ENCODE measurements at regions of chr20 and their contacts with region 1.

Region 1: DNA sequence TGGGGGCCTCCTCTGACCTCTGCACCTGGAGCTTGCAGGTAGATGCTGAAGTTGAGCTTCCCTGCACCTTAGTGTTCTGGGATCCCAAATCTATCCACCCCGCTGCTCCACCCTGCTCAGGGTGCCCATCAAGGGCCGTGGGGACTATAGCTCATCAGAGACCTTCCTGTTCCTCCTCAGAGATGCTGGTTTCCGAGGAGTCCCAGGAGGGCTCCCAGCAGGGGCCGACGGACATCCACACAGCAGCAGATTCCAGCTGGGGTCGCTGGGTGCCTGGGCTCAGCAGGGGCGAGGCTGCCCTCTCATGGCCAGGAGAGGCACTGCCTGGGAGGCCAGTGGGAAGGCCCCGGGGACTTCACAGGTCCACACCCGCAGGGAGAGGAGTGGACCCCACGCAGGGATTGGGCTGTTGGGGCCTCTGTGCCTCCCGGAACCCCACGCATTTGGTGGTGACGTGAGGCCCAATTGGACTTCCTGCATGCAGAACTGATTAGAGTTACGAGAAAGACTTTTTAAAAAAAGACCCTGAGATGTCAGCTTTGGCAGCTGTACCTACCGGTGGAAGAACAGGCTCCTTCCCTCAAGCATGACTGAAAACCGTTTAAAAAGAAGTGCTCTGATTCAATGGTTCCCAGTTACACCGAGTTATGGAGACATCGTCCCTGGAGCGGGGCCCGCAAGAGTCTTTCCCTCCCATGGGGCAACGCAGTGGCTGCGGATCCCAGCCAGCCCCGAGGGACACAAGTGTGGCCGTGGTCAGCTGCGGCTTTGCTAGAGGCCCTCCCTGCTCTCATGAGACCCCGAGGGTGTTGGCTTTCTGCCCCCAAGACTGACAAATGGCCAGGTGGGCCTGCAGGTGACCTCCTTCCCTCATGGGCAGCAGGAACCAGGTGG is 25.3 kb upstream of the SLCO4A1 start:
- DNase-seq: peak; percentile 81
- ATAC-seq: peak; percentile 87
- H3K4me3 Mint-ChIP-seq: no peak overlapping the region
- H3K27ac Mint-ChIP-seq: no peak overlapping the region
- H3K4me1 Mint-ChIP-seq: peaks cover 6% of the 10 kb centered on the region
- H3K27me3 Mint-ChIP-seq: no peaks in the 10 kb centered on the region; the same call in 1 of the 2 replicates
- CTCF ChIP-seq: peak; percentile 70

Region 2: GRCh38 chr20:62409931-62410745 is 206.8 kb before region 1 on chr20:
- CTCF ChIA-PET with region 1: interaction called, 11 read pairs
- POLR2A ChIA-PET with region 1: no interaction called
- DNase-seq: peak; percentile 76
- ATAC-seq: peak; percentile 29
- H3K4me3 Mint-ChIP-seq: no peak overlapping the region
- H3K27ac Mint-ChIP-seq: no peak overlapping the region
- H3K4me1 Mint-ChIP-seq: peaks cover 9% of the 10 kb centered on the region
- H3K27me3 Mint-ChIP-seq: peaks cover 5% of the 10 kb centered on the region
- CTCF ChIP-seq: peak; percentile 54; the same call in 1 of the 2 replicates

Region 3: GRCh38 chr20:62500237-62500864 is 116.6 kb before region 1 on chr20:
- CTCF ChIA-PET with region 1: interaction called, 45 read pairs
- POLR2A ChIA-PET with region 1: no interaction called
- DNase-seq: peak; percentile 88
- ATAC-seq: peak; percentile 64
- H3K4me3 Mint-ChIP-seq: no peak overlapping the region
- H3K27ac Mint-ChIP-seq: peak overlapping the region; percentile 0; the same call in 1 of the 2 replicates
- H3K4me1 Mint-ChIP-seq: peaks cover 3% of the 10 kb centered on the region
- H3K27me3 Mint-ChIP-seq: peaks cover 5% of the 10 kb centered on the region; the same call in 1 of the 2 replicates
- CTCF ChIP-seq: peak; percentile 82

Region 4: DNA sequence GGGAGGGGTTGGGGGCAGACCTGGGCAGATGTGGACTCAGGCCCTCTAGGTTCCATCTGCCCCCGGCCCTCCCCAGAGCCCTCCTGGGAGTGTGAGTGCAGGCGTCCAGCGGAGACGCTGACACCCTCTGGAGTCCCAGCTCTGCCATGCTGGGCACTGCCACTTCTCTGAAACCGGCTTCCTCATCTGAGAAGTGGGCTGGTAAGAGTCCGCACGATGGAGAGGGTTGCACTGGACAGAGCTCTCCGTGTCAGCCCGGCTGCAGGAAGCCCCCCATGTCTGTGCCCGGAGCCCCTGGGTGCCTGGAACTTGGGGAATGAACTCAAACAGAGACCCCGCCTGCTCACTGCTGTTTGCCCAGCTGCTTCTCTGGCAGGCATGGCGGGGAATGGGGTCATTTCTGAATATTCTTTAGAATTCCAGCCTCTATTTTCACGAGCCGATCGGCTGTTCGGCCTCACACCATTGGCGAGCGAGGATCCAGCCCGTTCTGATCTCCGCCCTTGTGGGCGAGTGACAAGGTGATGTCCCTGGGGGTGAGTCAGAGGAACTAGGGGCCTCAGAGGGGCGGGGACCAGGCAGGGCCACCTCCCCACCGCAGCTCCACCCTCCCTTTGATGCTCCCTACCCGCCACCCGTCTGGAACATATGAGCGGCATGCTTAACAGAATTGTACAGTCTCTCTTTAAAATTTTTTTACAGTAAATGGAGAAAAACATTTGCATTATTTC is 93.3 kb before region 1 on chr20:
- CTCF ChIA-PET with region 1: interaction called, 22 read pairs
- POLR2A ChIA-PET with region 1: no interaction called
- DNase-seq: peak; percentile 52
- ATAC-seq: peak; percentile 88
- H3K4me3 Mint-ChIP-seq: peak overlapping the region; percentile 12; the same call in 1 of the 2 replicates
- H3K27ac Mint-ChIP-seq: no peak overlapping the region
- H3K4me1 Mint-ChIP-seq: peaks cover 11% of the 10 kb centered on the region
- H3K27me3 Mint-ChIP-seq: no peaks in the 10 kb centered on the region
- CTCF ChIP-seq: no peak

Region 5: GRCh38 chr20:62557445-62557844 is 59.5 kb before region 1 on chr20:
- CTCF ChIA-PET with region 1: interaction called, 12 read pairs
- POLR2A ChIA-PET with region 1: no interaction called
- DNase-seq: no peak
- ATAC-seq: no peak
- H3K4me3 Mint-ChIP-seq: no peak overlapping the region
- H3K27ac Mint-ChIP-seq: no peak overlapping the region
- H3K4me1 Mint-ChIP-seq: 0 out of 2 replicates have a peak, but pooled peaks cover 3% of the 10 kb centered on the region
- H3K27me3 Mint-ChIP-seq: peaks cover 4% of the 10 kb centered on the region
- CTCF ChIP-seq: no peak

Region 6: DNA sequence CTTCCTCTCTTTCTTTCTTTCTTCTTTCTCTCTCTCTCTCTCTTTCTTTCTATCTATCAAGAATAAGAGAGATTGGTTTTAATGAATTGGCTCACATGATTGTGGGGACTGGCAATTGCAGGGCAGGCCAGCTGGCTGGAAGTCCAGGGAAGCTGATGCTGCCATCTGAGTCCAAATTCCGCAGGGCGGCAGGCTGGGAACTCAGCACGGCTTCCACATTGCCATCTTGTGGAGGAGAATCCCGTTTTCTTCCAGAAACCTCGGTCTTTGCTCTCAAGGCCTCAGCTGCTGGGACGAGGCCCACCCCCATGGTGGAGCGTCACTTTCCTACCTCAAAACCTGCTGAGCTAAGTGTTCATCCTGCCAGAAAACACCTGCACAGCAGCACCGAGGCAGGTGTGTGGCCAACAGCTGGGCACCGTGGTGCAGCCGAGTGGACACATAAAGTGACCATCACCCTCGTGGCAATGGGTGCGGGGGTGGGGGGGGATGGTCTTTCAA is 33.5 kb before region 1 on chr20:
- CTCF ChIA-PET with region 1: interaction called, 22 read pairs
- POLR2A ChIA-PET with region 1: no interaction called
- DNase-seq: no peak
- ATAC-seq: no peak; the same call in 1 of the 2 replicates
- H3K4me3 Mint-ChIP-seq: no peak overlapping the region
- H3K27ac Mint-ChIP-seq: no peak overlapping the region
- H3K4me1 Mint-ChIP-seq: peaks cover 2% of the 10 kb centered on the region; the same call in 1 of the 2 replicates
- H3K27me3 Mint-ChIP-seq: no peaks in the 10 kb centered on the region; the same call in 1 of the 2 replicates
- CTCF ChIP-seq: no peak

Region 7: GRCh38 chr20:62642040-62642665 is 25.2 kb after region 1 on chr20 and contains the start of gene SLCO4A1:
- CTCF ChIA-PET with region 1: interaction called, 16 read pairs
- POLR2A ChIA-PET with region 1: no interaction called
- DNase-seq: peak; percentile 73
- ATAC-seq: peak; percentile 76
- H3K4me3 Mint-ChIP-seq: peak within 1 kb of the TSS; percentile 65
- H3K27ac Mint-ChIP-seq: no peak within 1 kb of the TSS
- H3K4me1 Mint-ChIP-seq: peaks cover 13% of the 10 kb centered on the region
- H3K27me3 Mint-ChIP-seq: peaks cover 41% of the 10 kb centered on the region
- CTCF ChIP-seq: no peak
- total RNA-seq, gene SLCO4A1: 15.2 to 19.9 TPM (median 18.5 TPM) in 3 replicates

Region 8: DNA sequence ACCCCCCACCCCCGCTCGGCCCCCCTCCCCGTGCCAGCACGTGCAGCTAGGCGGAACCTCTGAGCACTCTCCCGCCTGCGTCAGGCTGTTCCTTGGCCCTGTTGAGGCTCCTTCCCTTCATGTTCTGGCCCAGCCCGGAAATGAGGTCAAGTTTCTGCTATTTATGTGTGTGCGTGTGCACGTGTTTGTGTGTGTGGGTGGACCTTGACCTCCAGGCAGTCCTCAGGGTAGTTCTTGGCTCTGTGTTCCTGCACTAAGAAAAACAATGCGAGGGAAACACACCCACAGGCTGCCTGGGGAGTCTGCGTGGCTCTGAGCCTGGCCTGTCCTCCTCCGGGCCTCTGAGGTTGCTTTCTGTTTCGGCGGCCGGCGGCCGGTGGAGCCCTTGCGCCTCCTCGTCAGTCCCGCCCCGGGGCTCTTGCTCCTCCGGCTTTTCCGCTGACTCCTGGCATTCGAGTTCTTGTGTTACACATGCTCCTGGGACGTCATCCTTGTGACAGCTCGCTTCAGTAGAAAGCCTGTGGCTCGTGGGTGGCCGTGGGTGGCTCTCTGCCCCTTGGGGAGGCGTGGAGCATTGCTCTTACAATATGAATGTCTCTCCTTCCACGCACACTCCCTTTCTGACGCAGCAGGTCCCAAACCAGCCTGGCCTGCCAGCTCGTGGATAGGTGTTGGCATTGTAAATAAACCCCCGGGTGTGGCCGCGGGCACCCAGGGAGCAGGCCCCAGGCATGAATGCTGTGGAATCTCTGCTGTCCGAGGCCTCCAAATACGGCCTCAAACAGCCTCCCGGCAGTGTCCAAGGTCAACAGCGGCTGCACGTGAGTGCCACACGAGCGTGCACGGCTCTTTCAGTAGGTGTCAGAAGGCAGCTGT is 35.3 kb after region 1 on chr20:
- CTCF ChIA-PET with region 1: no interaction called
- POLR2A ChIA-PET with region 1: no interaction called
- DNase-seq: peak; percentile 50
- ATAC-seq: peak; percentile 39
- H3K4me3 Mint-ChIP-seq: no peak overlapping the region
- H3K27ac Mint-ChIP-seq: peak overlapping the region; percentile 82
- H3K4me1 Mint-ChIP-seq: peaks cover 18% of the 10 kb centered on the region
- H3K27me3 Mint-ChIP-seq: no peaks in the 10 kb centered on the region
- CTCF ChIP-seq: no peak

Region 9: DNA sequence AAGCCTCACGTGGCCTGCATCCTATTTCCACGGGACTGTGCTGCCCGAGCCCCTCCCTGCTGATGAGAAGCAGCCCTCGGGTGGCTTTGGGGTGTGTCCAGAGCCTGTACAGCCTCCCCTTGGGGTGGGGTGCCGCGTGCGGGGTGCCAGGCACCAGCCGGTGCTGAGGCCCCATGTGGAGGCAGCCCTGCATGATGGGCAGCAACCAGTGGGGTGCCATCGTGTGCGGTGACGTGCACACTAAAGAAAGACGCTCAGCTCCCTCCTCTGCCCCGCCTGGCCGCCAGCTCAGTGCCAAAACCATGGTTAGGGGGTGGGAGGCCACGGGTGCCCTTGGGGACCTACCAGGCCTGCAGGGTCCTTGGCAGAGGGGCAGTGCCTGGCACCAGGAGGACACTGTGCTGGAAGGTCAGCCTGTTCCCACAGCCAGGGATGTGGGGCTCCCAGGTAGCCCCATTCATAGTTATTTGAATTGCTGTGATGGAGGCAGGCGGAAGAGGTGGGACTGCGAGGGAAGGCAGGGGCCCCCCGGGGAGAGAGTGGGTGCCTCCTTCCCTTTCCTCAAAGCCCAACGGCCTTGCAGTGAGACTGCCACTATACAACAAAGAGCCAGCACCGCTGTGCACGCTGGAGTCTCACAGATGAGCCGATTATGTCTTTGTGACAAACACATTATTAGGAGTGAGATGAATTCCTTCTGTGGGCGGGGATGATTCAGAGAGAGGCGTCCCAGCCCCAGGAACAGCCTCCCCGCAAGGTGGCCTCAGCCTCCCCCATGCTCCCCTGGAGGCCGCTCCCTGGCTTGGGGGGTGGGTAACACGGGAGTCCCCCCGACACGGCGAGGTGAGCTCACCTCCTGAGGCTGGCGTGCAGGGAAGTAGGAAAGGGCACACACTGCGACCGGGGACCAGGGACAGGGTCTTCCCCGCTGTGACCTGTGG is 118.2 kb after region 1 on chr20:
- CTCF ChIA-PET with region 1: no interaction called
- POLR2A ChIA-PET with region 1: no interaction called
- DNase-seq: no peak
- ATAC-seq: no peak
- H3K4me3 Mint-ChIP-seq: no peak overlapping the region
- H3K27ac Mint-ChIP-seq: no peak overlapping the region
- H3K4me1 Mint-ChIP-seq: peaks cover 3% of the 10 kb centered on the region; the same call in 1 of the 2 replicates
- H3K27me3 Mint-ChIP-seq: peaks cover 8% of the 10 kb centered on the region
- CTCF ChIP-seq: no peak

Region 10: GRCh38 chr20:62771396-62772102 is 154.6 kb after region 1 on chr20:
- CTCF ChIA-PET with region 1: no interaction called
- POLR2A ChIA-PET with region 1: no interaction called
- DNase-seq: no peak
- ATAC-seq: no peak
- H3K4me3 Mint-ChIP-seq: no peak overlapping the region
- H3K27ac Mint-ChIP-seq: no peak overlapping the region
- H3K4me1 Mint-ChIP-seq: peaks cover 6% of the 10 kb centered on the region
- H3K27me3 Mint-ChIP-seq: no peaks in the 10 kb centered on the region
- CTCF ChIP-seq: no peak

Region 11: GRCh38 chr20:63246490-63247288 is 629.7 kb after region 1 on chr20:
- CTCF ChIA-PET with region 1: no interaction called
- POLR2A ChIA-PET with region 1: no interaction called
- DNase-seq: peak; percentile 54
- ATAC-seq: peak; percentile 71
- H3K4me3 Mint-ChIP-seq: no peak overlapping the region
- H3K27ac Mint-ChIP-seq: no peak overlapping the region
- H3K4me1 Mint-ChIP-seq: peaks cover 3% of the 10 kb centered on the region
- H3K27me3 Mint-ChIP-seq: peaks cover 7% of the 10 kb centered on the region; the same call in 1 of the 2 replicates
- CTCF ChIP-seq: no peak

Measured in WTC11 (cell line).